CD4-positive, alpha-beta T cell (primary cell): ENCODE measurements at regions of chr7 and their contacts with region 1.

Region 1: DNA sequence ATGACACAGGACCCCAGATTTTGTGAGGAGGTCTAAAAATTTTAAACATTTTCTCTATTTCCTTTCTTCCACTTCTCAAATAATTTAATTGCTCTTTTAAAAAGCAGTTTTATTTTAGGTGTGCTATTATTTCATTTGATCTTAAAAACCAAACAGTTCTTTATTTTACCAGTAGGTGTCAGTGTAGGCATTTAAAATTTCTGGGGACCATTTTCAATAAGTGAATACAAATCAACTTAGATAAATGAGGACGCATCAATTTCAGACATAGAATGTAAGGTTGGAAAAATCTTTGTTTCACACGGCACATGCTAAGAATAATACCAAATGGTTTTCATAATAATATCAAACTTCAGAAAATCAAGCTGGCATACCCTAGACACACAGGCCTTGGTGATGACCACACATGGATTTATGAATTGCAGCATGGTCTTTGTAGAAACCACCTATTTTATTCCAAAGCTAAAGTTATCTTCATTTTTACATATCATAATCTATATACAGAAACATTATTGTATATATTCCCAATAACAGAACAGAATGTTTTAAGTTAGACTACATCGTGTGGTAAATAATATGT is 127.6 kb upstream of the SLC26A5 start:
- DNase-seq: peak in 3 of 14 experiments; percentile 30 to 46 (median 41)
- ATAC-seq: no peak
- H3K4me3 ChIP-seq: no peak overlapping the region
- H3K4me3 Mint-ChIP-seq: no peak overlapping the region
- H3K27ac ChIP-seq: no peak overlapping the region
- H3K27ac Mint-ChIP-seq: no peak overlapping the region
- H3K4me1 ChIP-seq: no peaks in the 10 kb centered on the region
- H3K4me1 Mint-ChIP-seq: no peaks in the 10 kb centered on the region
- H3K27me3 ChIP-seq: peaks cover 0 to 4% of the 10 kb centered on the region in 2 experiments
- H3K27me3 Mint-ChIP-seq: peaks cover 38% of the 10 kb centered on the region
- CTCF ChIP-seq: peak; percentile 69

Region 2: GRCh38 chr7:103551006-103551405 is 22.6 kb before region 1 on chr7:
- CTCF ChIA-PET with region 1: no interaction called
- POLR2A ChIA-PET with region 1: no interaction called
- intact Hi-C with region 1: no loop called
- DNase-seq: no peak
- ATAC-seq: no peak
- H3K4me3 ChIP-seq: no peak overlapping the region
- H3K4me3 Mint-ChIP-seq: no peak overlapping the region
- H3K27ac ChIP-seq: no peak overlapping the region
- H3K27ac Mint-ChIP-seq: no peak overlapping the region
- H3K4me1 ChIP-seq: no peaks in the 10 kb centered on the region
- H3K4me1 Mint-ChIP-seq: no peaks in the 10 kb centered on the region
- H3K27me3 ChIP-seq: peaks cover 0 to 3% of the 10 kb centered on the region in 2 experiments
- H3K27me3 Mint-ChIP-seq: peaks cover 26% of the 10 kb centered on the region
- CTCF ChIP-seq: no peak

Region 3: GRCh38 chr7:104156842-104157277 is 583.3 kb after region 1 on chr7:
- CTCF ChIA-PET with region 1: no interaction called
- POLR2A ChIA-PET with region 1: no interaction called
- intact Hi-C with region 1: loop called (anchors 2 to 10 kb)
- DNase-seq: peak in 2 of 14 experiments; percentile 1 to 10
- ATAC-seq: no peak
- H3K4me3 ChIP-seq: no peak overlapping the region
- H3K4me3 Mint-ChIP-seq: no peak overlapping the region
- H3K27ac ChIP-seq: no peak overlapping the region
- H3K27ac Mint-ChIP-seq: no peak overlapping the region
- H3K4me1 ChIP-seq: no peaks in the 10 kb centered on the region
- H3K4me1 Mint-ChIP-seq: peaks cover 11% of the 10 kb centered on the region
- H3K27me3 ChIP-seq: no peaks in the 10 kb centered on the region
- H3K27me3 Mint-ChIP-seq: no peaks in the 10 kb centered on the region
- CTCF ChIP-seq: peak; percentile 54